Common myeloid progenitor, CD34-positive (primary cell): ENCODE measurements at regions of chr17 and their contacts with region 1.

Region 1: GRCh38 chr17:75173526-75173925 is 9.2 kb downstream of the SUMO2 start:
- DNase-seq: no peak
- H3K4me3 ChIP-seq: no peak overlapping the region
- H3K27ac ChIP-seq: peak overlapping the region in 1 of 2 experiments; percentile 37
- H3K4me1 ChIP-seq: peaks cover 0 to 2% (median 0%) of the 10 kb centered on the region in 4 experiments
- H3K27me3 ChIP-seq: no peaks in the 10 kb centered on the region

Region 2: GRCh38 chr17:75046582-75047289 is 126.8 kb before region 1 on chr17 and contains the starts of genes ATP5PD and KCTD2:
- CTCF ChIA-PET with region 1: no interaction called
- POLR2A ChIA-PET with region 1: no interaction called
- DNase-seq: peak; percentile 97 to 98 (median 98)
- H3K4me3 ChIP-seq: peak within 1 kb of the TSS; percentile 60 to 98 (median 94)
- H3K27ac ChIP-seq: peak within 1 kb of the TSS; percentile 79 to 90
- H3K4me1 ChIP-seq: peaks cover 9 to 23% (median 18%) of the 10 kb centered on the region in 4 experiments
- H3K27me3 ChIP-seq: no peaks in the 10 kb centered on the region

Region 3: DNA sequence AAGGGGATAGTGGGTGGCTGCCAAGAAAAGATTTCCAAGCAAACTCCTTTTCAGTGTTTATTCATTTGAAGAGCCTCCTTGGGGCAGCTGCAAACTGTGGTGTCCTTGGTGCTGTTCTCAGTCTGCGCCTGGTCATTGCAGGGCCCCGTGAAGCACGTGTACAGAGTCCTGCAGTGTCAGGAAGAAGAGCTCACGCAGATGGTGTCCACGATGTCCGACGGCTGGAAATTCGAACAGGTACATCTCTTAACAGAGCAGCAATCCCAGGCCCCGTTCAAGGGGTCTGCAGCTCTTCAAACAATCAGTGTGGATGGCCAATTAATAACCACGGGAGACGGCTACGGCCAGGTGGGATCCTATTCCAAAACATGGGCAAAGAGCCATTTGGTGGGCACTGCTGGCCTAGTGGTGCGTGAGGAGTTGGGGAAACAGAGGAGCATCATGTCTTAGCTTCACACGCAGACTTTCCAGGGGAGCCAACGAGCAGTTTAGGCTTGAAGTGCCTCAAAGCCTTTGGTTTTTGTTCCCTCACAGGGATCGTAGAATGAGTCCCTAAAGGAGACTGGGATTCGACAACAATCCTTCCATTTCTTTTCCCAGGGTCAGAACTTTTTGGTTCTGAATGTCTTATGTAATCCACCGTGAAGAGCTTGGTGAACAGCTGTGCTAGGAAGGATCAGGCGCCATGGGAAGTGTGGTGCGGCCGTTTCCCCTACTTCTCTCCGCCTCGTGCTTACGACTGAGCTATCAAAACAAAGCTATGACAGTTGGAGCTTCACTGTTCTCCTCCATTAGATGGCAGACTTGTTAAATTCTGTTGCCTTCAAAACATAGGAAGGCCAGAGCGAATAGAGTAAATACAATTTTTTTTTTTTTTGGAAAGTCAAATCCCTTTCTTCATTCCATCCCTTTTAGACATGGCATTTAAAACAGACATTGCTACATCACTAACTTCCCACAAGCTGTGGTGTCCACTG is 113.9 kb before region 1 on chr17:
- CTCF ChIA-PET with region 1: interaction called, 10 read pairs
- POLR2A ChIA-PET with region 1: interaction called, 3 read pairs
- DNase-seq: peak; percentile 69 to 79 (median 78)
- H3K4me3 ChIP-seq: no peak overlapping the region
- H3K27ac ChIP-seq: peak overlapping the region; percentile 46 to 68
- H3K4me1 ChIP-seq: peaks cover 1 to 10% (median 5%) of the 10 kb centered on the region in 4 experiments
- H3K27me3 ChIP-seq: no peaks in the 10 kb centered on the region

Region 4: DNA sequence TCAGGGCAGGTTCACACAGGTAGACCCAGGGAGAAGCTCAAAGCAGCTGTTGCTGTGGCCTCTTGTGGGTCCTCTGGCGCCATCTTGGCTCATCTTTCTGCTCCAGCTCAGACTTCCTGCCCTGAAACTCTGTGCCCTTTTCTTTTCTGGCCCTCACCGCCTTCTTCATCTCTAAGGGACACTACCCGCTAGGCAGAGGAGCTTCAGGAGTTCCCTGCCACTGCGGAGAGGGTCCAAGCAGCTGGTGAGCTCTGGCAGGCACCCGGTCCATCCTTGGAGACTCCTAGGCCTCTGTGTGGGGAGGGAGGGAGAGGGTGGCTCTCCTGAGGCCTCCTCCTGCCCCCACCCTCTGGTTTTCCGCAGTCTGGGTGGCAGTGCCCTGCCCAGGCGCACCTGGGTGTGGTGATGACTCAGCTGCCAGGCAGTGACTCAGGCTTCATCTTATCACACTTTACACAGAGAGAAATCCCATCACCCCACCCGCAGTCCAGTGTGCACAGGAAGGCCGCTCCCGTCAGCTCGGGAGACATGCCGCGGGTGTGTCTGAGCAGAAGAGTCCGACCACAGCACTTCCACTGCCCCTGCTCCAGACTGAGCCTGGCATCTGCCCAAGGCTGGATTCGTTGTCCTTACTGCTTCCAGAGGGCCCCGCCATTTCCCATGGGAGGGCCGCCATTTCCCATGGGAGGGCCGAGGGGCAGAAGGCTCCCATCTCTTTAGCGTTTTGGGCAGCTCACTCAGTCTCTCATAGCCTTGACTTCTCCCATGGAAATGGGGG is 49.3 kb before region 1 on chr17:
- CTCF ChIA-PET with region 1: interaction called, 13 read pairs
- POLR2A ChIA-PET with region 1: interaction called, 5 read pairs
- DNase-seq: peak; percentile 94 to 97 (median 96)
- H3K4me3 ChIP-seq: peak overlapping the region in 2 of 7 experiments; percentile 28 to 49
- H3K27ac ChIP-seq: peak overlapping the region; percentile 64 to 85
- H3K4me1 ChIP-seq: peaks cover 5 to 34% (median 29%) of the 10 kb centered on the region in 4 experiments
- H3K27me3 ChIP-seq: no peaks in the 10 kb centered on the region

Region 5: GRCh38 chr17:75147878-75148546 is 25.5 kb before region 1 on chr17:
- CTCF ChIA-PET with region 1: interaction called, 11 read pairs
- POLR2A ChIA-PET with region 1: interaction called, 4 read pairs
- DNase-seq: no peak
- H3K4me3 ChIP-seq: no peak overlapping the region
- H3K27ac ChIP-seq: no peak overlapping the region
- H3K4me1 ChIP-seq: peaks cover 0 to 10% (median 6%) of the 10 kb centered on the region in 4 experiments
- H3K27me3 ChIP-seq: no peaks in the 10 kb centered on the region

Region 6: DNA sequence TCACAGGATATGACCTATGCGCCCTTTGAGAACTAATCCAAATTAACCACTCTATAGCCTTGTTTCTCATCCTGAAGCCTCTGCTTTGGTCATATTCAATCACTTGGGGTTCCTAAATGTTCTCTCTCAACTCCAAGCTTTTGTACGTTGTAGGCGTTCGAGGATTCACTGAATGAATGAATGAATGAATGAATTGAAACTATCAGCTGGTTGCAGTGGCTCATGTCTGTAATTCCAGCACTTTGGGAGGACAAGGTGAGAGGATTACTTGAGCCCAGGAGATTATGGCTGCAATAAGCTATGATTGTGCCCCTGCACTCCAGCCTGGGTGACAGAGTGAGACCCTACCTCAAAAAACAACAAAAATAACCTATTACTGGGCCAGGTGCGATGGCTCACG is 15.1 kb after region 1 on chr17:
- CTCF ChIA-PET with region 1: interaction called, 10 read pairs
- POLR2A ChIA-PET with region 1: no interaction called
- DNase-seq: no peak
- H3K4me3 ChIP-seq: no peak overlapping the region
- H3K27ac ChIP-seq: no peak overlapping the region
- H3K4me1 ChIP-seq: peaks cover 2 to 4% (median 3%) of the 10 kb centered on the region in 4 experiments
- H3K27me3 ChIP-seq: no peaks in the 10 kb centered on the region

Region 7: GRCh38 chr17:75199886-75200618 is 26.5 kb after region 1 on chr17:
- CTCF ChIA-PET with region 1: interaction called, 16 read pairs
- POLR2A ChIA-PET with region 1: interaction called, 4 read pairs
- DNase-seq: no peak
- H3K4me3 ChIP-seq: no peak overlapping the region
- H3K27ac ChIP-seq: no peak overlapping the region
- H3K4me1 ChIP-seq: peaks cover 0 to 9% (median 5%) of the 10 kb centered on the region in 4 experiments
- H3K27me3 ChIP-seq: no peaks in the 10 kb centered on the region

Region 8: GRCh38 chr17:75970011-75970523 is 796.5 kb after region 1 on chr17:
- CTCF ChIA-PET with region 1: no interaction called
- POLR2A ChIA-PET with region 1: no interaction called
- DNase-seq: peak in 1 of 3 donors; percentile 23
- H3K4me3 ChIP-seq: no peak overlapping the region
- H3K27ac ChIP-seq: no peak overlapping the region
- H3K4me1 ChIP-seq: peaks cover 0 to 5% (median 0%) of the 10 kb centered on the region in 4 experiments
- H3K27me3 ChIP-seq: no peaks in the 10 kb centered on the region